ENCODE measurements at regions of chr6 and their contacts with region 1.

Region 1: DNA sequence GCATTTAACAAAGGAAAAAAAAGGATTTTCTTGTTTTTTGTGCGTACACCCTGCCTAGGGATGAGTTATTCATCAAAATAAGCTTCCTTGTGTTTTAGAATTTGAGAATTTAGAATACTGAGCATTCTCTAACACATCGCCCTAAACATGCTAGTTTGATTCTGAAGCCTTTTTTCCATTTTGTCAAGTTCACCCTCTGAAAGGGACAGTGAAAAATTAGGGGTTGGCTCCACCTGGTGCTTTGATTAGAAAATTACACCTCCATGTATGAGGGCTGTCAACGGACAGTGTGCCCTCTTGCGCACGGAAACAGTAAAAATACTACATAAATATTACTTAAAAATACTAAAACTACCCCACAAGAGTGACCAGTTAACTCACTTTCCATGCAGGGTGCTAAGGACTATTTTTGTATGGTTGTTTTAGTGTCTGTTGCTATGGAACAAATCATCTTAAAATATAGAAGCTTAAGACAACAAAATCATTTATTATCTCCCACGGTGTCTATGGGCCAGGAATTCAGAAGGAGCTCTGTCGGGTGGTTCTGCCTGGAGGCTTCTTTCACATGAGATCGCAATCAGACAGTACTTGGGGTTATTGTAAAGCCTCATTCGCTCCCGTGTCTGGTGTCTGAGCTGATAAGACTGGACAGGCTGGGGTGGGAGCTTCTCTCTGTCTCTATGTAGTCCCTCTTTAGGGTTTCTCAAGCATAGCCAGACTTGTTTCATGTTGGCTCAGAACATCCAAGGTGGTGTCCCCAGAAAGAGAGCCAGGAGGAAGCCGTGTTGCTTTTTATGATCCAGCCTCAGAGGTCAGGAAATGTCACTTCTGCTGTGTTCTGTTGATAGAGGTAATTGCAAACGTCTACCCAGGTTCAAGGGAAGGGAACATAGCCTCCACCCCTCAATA is 41.1 kb upstream of the TMEM170B start:
- DNase-seq: peak; percentile 86
- ATAC-seq: peak; percentile 88
- H3K4me3 Mint-ChIP-seq: no peak overlapping the region
- H3K27ac Mint-ChIP-seq: no peak overlapping the region
- H3K4me1 Mint-ChIP-seq: peaks cover 10% of the 10 kb centered on the region
- H3K27me3 Mint-ChIP-seq: no peaks in the 10 kb centered on the region

Region 2: GRCh38 chr6:10954590-10955010 is 541.8 kb before region 1 on chr6:
- CTCF ChIA-PET with region 1: interaction called, 26 read pairs
- POLR2A ChIA-PET with region 1: no interaction called
- DNase-seq: peak; percentile 80
- ATAC-seq: peak; percentile 86
- H3K4me3 Mint-ChIP-seq: no peak overlapping the region
- H3K27ac Mint-ChIP-seq: no peak overlapping the region
- H3K4me1 Mint-ChIP-seq: no peaks in the 10 kb centered on the region
- H3K27me3 Mint-ChIP-seq: peaks cover 7% of the 10 kb centered on the region

Region 3: DNA sequence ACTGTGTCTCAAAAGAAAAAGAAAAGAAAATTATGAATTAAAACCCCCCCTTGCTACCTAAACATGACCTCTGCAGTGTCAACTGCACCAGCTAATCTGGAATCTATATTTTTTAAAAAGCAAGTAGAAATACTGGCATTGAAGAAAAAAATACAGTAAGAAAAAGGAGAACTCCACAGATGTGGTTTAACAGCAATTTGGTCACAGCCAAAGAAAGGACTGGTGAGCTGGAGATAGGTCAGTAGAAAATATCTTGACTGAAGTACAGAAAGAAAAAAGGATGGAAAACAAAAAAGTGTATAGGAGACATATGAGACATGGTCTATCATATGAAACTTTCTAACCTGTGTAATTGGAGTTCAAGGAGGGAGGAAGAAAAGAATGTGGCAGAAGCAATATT is 340.8 kb before region 1 on chr6:
- CTCF ChIA-PET with region 1: interaction called, 12 read pairs
- POLR2A ChIA-PET with region 1: no interaction called
- DNase-seq: no peak
- ATAC-seq: no peak
- H3K4me3 Mint-ChIP-seq: no peak overlapping the region
- H3K27ac Mint-ChIP-seq: no peak overlapping the region
- H3K4me1 Mint-ChIP-seq: peaks cover 7% of the 10 kb centered on the region
- H3K27me3 Mint-ChIP-seq: peaks cover 16% of the 10 kb centered on the region

Region 4: GRCh38 chr6:11224252-11224965 is 272.0 kb before region 1 on chr6:
- CTCF ChIA-PET with region 1: interaction called, 19 read pairs
- POLR2A ChIA-PET with region 1: no interaction called
- DNase-seq: peak; percentile 82
- ATAC-seq: peak; percentile 82
- H3K4me3 Mint-ChIP-seq: peak overlapping the region; percentile 68
- H3K27ac Mint-ChIP-seq: peak overlapping the region; percentile 94
- H3K4me1 Mint-ChIP-seq: peaks cover 86% of the 10 kb centered on the region
- H3K27me3 Mint-ChIP-seq: no peaks in the 10 kb centered on the region

Region 5: GRCh38 chr6:11366183-11366933 is 130.0 kb before region 1 on chr6:
- CTCF ChIA-PET with region 1: interaction called, 13 read pairs
- POLR2A ChIA-PET with region 1: no interaction called
- DNase-seq: peak; percentile 67
- ATAC-seq: peak; percentile 82
- H3K4me3 Mint-ChIP-seq: peak overlapping the region; percentile 30
- H3K27ac Mint-ChIP-seq: peak overlapping the region; percentile 80
- H3K4me1 Mint-ChIP-seq: peaks cover 66% of the 10 kb centered on the region
- H3K27me3 Mint-ChIP-seq: no peaks in the 10 kb centered on the region

Region 6: DNA sequence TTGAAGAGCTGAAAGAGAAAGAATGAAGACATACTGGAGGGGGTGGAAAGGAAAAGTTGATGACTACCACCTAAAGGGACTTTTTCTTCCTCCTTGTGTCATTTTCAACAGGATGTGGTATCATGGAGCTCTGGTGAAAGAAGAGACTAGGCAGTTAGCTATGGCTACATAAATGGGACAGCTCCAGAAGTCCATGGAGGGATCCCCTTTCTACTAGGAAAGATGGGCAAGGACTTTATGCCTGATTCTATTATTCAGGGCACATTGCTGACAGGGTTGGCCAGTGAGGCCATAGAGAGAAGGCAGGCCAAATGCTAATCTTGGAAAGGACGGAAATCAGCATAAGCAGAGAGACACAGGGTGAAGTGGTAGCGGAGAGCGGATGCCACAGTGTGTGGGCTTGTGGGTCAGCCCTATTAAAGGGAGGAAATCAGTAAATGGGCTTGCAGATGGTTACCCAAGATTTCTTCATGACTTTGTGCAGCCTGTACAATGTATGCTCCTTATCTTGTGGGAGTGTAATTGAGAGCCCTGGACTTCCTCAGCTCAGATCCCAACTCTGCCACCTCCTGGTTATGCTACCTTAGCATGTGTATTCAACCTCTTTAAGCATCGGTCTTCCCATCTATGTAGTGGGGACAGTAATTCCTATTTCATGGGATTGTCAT is 36.3 kb before region 1 on chr6:
- CTCF ChIA-PET with region 1: interaction called, 12 read pairs
- POLR2A ChIA-PET with region 1: no interaction called
- DNase-seq: no peak
- ATAC-seq: peak; percentile 51
- H3K4me3 Mint-ChIP-seq: no peak overlapping the region
- H3K27ac Mint-ChIP-seq: no peak overlapping the region
- H3K4me1 Mint-ChIP-seq: peaks cover 25% of the 10 kb centered on the region
- H3K27me3 Mint-ChIP-seq: no peaks in the 10 kb centered on the region

Region 7: GRCh38 chr6:12941422-12941821 is 1445.0 kb after region 1 on chr6:
- CTCF ChIA-PET with region 1: no interaction called
- POLR2A ChIA-PET with region 1: no interaction called
- DNase-seq: peak; percentile 41
- ATAC-seq: peak; percentile 47
- H3K4me3 Mint-ChIP-seq: no peak overlapping the region
- H3K27ac Mint-ChIP-seq: peak overlapping the region; percentile 83
- H3K4me1 Mint-ChIP-seq: peaks cover 18% of the 10 kb centered on the region
- H3K27me3 Mint-ChIP-seq: peaks cover 5% of the 10 kb centered on the region